Kidney (tissue), 22 donors: ENCODE measurements at regions of chr12 and their contacts with region 1.

Region 1: GRCh38 chr12:14239935-14240872 is 125.3 kb upstream of the ATF7IP start:
- DNase-seq: peak in 4 of 5 donors; percentile 64 to 82 (median 77)
- H3K4me3 ChIP-seq: peak overlapping the region in 2 of 3 donors; percentile 5 to 39
- H3K27ac ChIP-seq: peak overlapping the region in 1 of 2 donors; percentile 9
- H3K4me1 ChIP-seq: peaks cover 0 to 10% (median 0%) of the 10 kb centered on the region in 3 donors
- H3K27me3 ChIP-seq: no peaks in the 10 kb centered on the region
- CTCF ChIP-seq: no peak

Region 2: GRCh38 chr12:14365294-14366208 is 125.3 kb after region 1 on chr12 and contains the start of gene ATF7IP:
- intact Hi-C with region 1: no loop called
- DNase-seq: peak; percentile 96 to 99 (median 98)
- H3K4me3 ChIP-seq: peak within 1 kb of the TSS; percentile 78 to 88 (median 79)
- H3K27ac ChIP-seq: peak within 1 kb of the TSS; percentile 98 to 99
- H3K4me1 ChIP-seq: peaks cover 0 to 11% (median 0%) of the 10 kb centered on the region in 3 donors
- H3K27me3 ChIP-seq: no peaks in the 10 kb centered on the region
- CTCF ChIP-seq: peak; percentile 33
- total RNA-seq, gene ATF7IP: 97.1 TPM

Region 3: DNA sequence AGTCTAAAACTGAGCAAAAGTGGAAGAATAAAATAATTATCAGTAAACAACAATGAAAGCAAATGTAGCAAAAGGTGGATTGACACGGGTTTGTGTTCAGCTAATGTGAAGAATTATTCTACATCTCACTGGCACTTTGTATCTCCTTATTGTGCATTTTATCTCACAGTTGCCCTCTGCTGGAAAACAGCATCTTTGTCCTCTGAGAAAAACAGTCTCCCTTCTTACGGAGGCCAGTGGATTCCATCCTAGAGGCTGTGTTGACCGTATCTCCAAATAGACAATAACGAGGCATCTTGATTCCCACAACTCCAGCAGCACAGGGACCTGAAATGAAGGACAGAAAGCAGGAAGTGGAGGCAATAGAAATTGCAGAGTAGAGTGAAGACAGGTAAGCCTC is 378.8 kb after region 1 on chr12:
- intact Hi-C with region 1: loop called (anchors 10 kb)
- DNase-seq: peak in 2 of 5 donors; percentile 27 to 50
- H3K4me3 ChIP-seq: no peak overlapping the region
- H3K27ac ChIP-seq: no peak overlapping the region
- H3K4me1 ChIP-seq: peaks cover 0 to 21% (median 4%) of the 10 kb centered on the region in 3 donors
- H3K27me3 ChIP-seq: no peaks in the 10 kb centered on the region
- CTCF ChIP-seq: peak; percentile 30